Kidney (tissue), 22 donors: ENCODE measurements at regions of chr17 and their contacts with region 1.

Region 1: GRCh38 chr17:46940621-46941404 is 17.9 kb downstream of the GOSR2 start:
- DNase-seq: peak; percentile 75 to 91 (median 84)
- H3K4me3 ChIP-seq: no peak overlapping the region
- H3K27ac ChIP-seq: no peak overlapping the region
- H3K4me1 ChIP-seq: peaks cover 0 to 19% (median 17%) of the 10 kb centered on the region in 3 donors
- H3K27me3 ChIP-seq: no peaks in the 10 kb centered on the region
- CTCF ChIP-seq: peak; percentile 82

Region 2: GRCh38 chr17:46841561-46842379 is 99.0 kb before region 1 on chr17:
- intact Hi-C with region 1: loop called (anchors 10 kb)
- DNase-seq: peak in 2 of 5 donors; percentile 34 to 51
- H3K4me3 ChIP-seq: no peak overlapping the region
- H3K27ac ChIP-seq: no peak overlapping the region
- H3K4me1 ChIP-seq: peaks cover 0 to 2% (median 0%) of the 10 kb centered on the region in 3 donors
- H3K27me3 ChIP-seq: peaks cover 3% of the 10 kb centered on the region
- CTCF ChIP-seq: peak; percentile 75

Region 3: DNA sequence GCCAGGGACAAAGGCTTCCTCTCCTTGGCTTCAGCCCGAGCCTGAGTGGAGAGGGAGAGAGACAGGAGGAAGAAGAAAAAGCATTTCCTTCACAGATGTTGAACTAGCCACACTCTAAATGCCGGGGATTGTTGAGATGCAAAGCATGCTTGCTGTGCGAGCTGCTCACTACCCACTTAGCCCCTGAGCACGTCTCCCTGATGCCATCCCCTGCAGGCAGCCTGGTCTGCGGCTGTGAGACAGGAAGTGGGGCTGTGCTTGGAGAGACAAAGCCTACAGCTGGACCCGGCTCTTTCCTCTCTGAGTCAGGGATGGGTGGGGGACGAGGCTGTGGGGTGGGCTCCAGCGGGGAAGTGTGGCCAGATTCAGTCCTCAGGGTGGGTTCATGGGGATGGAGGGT is 75.7 kb before region 1 on chr17:
- intact Hi-C with region 1: no loop called
- DNase-seq: peak in 1 of 5 donors; percentile 40
- H3K4me3 ChIP-seq: no peak overlapping the region
- H3K27ac ChIP-seq: no peak overlapping the region
- H3K4me1 ChIP-seq: peaks cover 0 to 10% (median 0%) of the 10 kb centered on the region in 3 donors
- H3K27me3 ChIP-seq: no peaks in the 10 kb centered on the region
- CTCF ChIP-seq: no peak